Activated CD8-positive, alpha-beta T cell treated with anti-CD3 and anti-CD28 coated beads, Interleukin-2, amount 10 ng/mL, durations not matched to agents 7 days and 5 days (primary cell): ENCODE measurements at regions of chr2 and their contacts with region 1.

Region 1: GRCh38 chr2:224520064-224520463 is 65.1 kb downstream of the CUL3 start:
- DNase-seq: peak; percentile 49
- ATAC-seq: no peak
- H3K4me3 Mint-ChIP-seq: no peak overlapping the region
- H3K27ac Mint-ChIP-seq: peak overlapping the region; percentile 9
- H3K4me1 Mint-ChIP-seq: peaks cover 44% of the 10 kb centered on the region
- H3K27me3 Mint-ChIP-seq: no peaks in the 10 kb centered on the region

Region 2: DNA sequence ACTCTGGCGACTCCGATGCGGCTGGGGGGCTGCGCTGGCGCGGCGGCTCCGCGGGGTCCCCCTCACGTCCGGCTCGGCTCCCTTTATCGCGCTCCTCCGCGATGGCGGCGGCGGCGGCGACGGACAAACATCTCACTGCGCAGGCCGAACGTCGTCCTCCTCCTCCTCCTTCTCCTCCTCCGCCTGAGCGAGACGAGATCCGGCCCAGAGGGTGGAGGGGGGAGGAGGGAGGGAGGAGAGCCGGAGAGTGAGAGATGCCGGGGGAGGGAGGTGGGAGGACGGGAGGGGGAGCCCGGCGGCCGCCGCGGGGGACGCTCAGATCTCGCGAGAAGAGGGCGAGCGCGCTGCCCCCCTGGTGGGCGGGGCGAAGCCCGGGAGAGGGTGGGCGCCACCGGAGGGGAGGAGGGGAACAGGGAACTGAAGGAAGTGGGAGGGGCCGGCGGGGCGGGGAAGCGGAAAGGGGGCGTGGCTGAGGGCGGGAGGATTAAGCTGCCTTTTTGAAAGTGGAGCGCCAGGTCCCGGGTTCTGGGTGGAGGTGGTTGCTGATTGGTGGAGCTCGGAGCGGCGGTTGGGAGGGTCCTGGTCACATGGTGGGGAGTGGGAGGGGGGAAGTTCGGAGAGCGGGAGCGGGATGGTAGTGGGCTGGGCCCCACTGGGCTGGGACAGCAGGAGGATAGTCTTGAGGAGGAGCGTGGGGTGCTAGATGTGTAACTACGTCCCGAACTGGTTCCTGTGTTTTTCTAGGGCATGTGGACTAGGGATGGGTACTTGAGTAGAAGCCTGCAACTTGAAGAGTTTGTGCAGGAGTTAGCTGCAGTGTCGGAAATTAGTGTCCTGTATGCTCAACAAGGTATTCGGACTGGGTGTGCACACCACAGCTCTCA is 65.4 kb after region 1 on chr2 and contains the start of gene CUL3:
- CTCF ChIA-PET with region 1: interaction called, 3 read pairs
- POLR2A ChIA-PET with region 1: interaction called, 32 read pairs
- DNase-seq: peak; percentile 100
- ATAC-seq: peak; percentile 87
- H3K4me3 Mint-ChIP-seq: peak within 1 kb of the TSS; percentile 98
- H3K27ac Mint-ChIP-seq: peak within 1 kb of the TSS; percentile 97
- H3K4me1 Mint-ChIP-seq: peaks cover 43% of the 10 kb centered on the region
- H3K27me3 Mint-ChIP-seq: no peaks in the 10 kb centered on the region
- total RNA-seq, gene CUL3: 77.9 to 82.0 TPM